ENCODE measurements at regions of chr3 and their contacts with region 1.

Region 1: DNA sequence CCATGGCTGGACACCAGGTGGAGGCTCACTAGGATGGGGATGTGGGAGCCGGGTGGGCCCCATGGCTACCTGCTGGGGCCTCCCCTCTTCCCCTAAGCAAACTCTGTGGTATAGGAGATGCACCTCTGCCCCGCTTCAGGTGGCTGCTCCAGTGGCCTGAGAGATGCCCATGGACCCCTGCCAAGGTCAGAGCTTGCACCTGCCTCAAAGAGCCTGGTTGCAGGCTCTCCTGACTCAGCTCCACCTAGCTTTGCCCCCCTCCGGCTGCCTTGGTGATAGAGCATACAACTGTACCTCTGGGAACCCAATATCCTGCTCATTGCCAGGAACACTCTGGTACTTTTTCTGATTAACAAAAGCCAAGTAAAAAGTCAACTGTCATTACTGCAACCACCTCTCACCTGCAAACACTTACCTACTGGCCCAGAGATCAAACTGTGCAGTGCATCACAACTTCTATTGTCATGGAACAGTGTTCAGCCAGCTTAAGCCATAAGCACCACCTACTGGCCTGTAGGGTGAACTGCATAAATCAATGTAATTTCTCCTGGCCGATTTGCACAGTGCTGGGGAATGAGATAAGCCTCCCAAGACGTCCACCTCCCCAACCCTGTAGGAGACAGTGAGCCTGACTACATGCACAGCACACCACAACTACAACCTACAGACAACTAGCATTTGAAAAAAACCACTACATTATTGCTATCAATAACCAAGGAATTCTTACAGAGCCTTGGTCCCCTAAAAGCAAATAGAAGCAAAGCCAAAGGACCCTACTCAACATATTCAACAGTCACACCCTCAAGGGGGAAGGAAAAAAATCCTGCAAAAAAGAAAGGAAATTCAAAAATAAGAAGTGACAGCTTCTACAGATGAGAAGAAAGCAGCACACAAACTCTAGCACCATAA is 352.4 kb upstream of the ARHGEF26 start:
- DNase-seq: peak in 1 of 2 donors; percentile 75
- H3K4me3 ChIP-seq: no peak overlapping the region
- H3K27ac ChIP-seq: no peak overlapping the region
- H3K4me1 ChIP-seq: no peaks in the 10 kb centered on the region
- H3K27me3 ChIP-seq: no peaks in the 10 kb centered on the region
- CTCF ChIP-seq: peak in 5 of 7 experiments; percentile 56 to 82 (median 70)
- EP300 ChIP-seq: no peak
- POLR2A ChIP-seq: no peak

Region 2: GRCh38 chr3:153026026-153026425 is 742.8 kb before region 1 on chr3:
- intact Hi-C with region 1: loop called (anchors 5 kb)
- DNase-seq: peak in 1 of 2 donors; percentile 53
- H3K4me3 ChIP-seq: no peak overlapping the region
- H3K27ac ChIP-seq: no peak overlapping the region
- H3K4me1 ChIP-seq: peaks cover 0 to 12% (median 4%) of the 10 kb centered on the region in 4 donors
- H3K27me3 ChIP-seq: no peaks in the 10 kb centered on the region
- CTCF ChIP-seq: peak in 4 of 7 experiments; percentile 3 to 55 (median 38)
- EP300 ChIP-seq: no peak
- POLR2A ChIP-seq: no peak

Region 3: GRCh38 chr3:153043729-153044328 is 725.0 kb before region 1 on chr3:
- intact Hi-C with region 1: loop called (anchors 5 kb)
- DNase-seq: no peak
- H3K4me3 ChIP-seq: no peak overlapping the region
- H3K27ac ChIP-seq: no peak overlapping the region
- H3K4me1 ChIP-seq: peaks cover 0 to 13% (median 3%) of the 10 kb centered on the region in 4 donors
- H3K27me3 ChIP-seq: no peaks in the 10 kb centered on the region
- CTCF ChIP-seq: no peak
- EP300 ChIP-seq: no peak
- POLR2A ChIP-seq: no peak